GM10248 (cell line): ENCODE measurements at regions of chr4 and their contacts with region 1.

Region 1: GRCh38 chr4:8403173-8403753 is 37.3 kb downstream of the ACOX3 start:
- DNase-seq: peak; percentile 78
- CTCF ChIP-seq: peak; percentile 80

Region 2: GRCh38 chr4:8236106-8236919 is 166.9 kb before region 1 on chr4:
- CTCF ChIA-PET with region 1: interaction called, 36 read pairs
- POLR2A ChIA-PET with region 1: no interaction called
- DNase-seq: no peak
- CTCF ChIP-seq: no peak

Region 3: GRCh38 chr4:8267077-8267476 is 136.2 kb before region 1 on chr4:
- CTCF ChIA-PET with region 1: interaction called, 85 read pairs
- POLR2A ChIA-PET with region 1: no interaction called
- DNase-seq: peak; percentile 82
- CTCF ChIP-seq: peak; percentile 73

Region 4: DNA sequence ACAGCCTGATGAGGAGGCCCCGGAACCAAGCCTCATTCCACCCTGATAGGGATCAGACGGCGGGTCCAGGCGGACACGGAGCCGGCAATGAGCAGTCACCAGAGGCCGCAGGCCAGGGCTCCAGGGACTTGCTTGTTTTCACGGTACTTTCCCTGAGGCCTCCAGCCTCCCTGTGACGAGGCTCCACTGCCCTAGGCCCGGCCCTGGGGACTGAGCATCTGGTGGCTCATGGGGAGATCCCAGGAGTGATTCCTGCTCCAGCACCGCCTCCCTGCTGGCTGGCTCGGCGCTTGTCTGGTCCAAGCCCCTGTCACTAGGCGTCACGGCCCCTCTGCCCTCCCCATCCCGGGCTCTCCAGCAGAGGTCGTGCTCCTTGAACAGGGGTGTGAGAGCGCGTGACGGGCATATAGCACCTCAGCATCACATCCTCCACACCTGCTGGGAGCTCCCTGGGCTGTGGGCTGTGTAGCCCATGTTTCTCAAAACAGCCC is 119.6 kb before region 1 on chr4:
- CTCF ChIA-PET with region 1: no interaction called
- POLR2A ChIA-PET with region 1: no interaction called
- DNase-seq: no peak
- CTCF ChIP-seq: no peak

Region 5: GRCh38 chr4:8376361-8376760 is 26.9 kb before region 1 on chr4:
- CTCF ChIA-PET with region 1: interaction called, 13 read pairs
- POLR2A ChIA-PET with region 1: no interaction called
- DNase-seq: no peak
- CTCF ChIP-seq: no peak

Region 6: DNA sequence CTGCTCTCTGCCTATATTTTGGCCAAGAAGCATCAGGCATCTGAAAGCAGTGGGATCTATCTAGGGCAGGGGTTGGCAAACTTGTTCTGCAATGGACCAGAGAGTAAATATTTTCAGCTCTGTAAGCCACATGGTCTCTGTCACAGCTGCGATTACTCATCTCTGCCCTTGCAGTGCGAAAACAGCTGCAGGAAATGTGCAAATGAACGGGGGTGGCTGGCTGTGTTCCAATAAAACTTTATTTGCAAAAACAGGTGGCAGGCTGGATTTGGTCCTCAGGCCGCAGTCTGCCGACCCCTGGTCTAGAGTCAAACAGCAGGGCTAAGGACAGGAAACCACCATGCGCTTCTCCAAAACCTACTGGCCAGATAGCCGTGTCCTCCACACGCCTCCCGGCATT is 11.3 kb before region 1 on chr4:
- CTCF ChIA-PET with region 1: interaction called, 27 read pairs
- POLR2A ChIA-PET with region 1: no interaction called
- DNase-seq: peak; percentile 57
- CTCF ChIP-seq: no peak

Region 7: DNA sequence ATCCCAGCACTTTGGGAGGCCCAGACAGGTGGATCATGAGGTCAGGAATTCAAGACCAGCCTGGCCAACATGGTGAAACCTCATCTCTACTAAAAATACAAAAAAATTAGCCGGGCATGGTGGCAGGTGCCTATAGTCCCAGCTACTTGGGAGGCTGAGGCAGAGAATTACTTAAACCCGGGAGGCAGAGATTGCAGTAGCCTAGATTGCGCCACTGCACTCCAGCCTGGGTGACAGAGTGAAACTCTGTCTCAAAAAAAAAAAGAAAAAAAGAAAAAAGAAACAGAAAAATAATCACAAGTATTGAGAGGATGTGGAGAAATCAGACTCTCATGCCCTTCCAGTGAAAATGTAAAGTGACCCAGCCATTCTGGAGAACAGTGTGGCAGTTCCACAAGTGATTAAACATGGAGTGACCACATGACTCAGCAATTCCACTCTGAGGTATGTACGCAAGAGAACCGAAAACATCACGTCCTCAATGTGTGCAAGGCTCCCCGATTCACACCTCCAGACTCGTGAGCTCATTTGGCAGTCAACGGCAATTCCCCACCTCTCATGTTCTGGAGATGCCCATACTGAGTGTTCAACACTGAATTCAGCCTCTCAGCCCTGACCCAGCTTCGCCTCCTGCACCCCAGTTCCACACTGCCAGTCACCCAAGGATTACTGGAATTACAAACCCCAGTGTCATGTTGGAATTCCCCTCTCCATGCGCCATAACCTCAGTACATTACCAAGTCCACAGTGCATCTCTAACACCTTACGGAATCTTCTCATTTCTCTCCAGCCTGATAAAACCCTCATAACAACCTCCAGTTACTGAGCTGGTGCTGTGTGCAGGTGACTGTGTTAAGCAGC is 16.1 kb after region 1 on chr4:
- CTCF ChIA-PET with region 1: interaction called, 48 read pairs
- POLR2A ChIA-PET with region 1: no interaction called
- DNase-seq: peak; percentile 73
- CTCF ChIP-seq: no peak

Region 8: DNA sequence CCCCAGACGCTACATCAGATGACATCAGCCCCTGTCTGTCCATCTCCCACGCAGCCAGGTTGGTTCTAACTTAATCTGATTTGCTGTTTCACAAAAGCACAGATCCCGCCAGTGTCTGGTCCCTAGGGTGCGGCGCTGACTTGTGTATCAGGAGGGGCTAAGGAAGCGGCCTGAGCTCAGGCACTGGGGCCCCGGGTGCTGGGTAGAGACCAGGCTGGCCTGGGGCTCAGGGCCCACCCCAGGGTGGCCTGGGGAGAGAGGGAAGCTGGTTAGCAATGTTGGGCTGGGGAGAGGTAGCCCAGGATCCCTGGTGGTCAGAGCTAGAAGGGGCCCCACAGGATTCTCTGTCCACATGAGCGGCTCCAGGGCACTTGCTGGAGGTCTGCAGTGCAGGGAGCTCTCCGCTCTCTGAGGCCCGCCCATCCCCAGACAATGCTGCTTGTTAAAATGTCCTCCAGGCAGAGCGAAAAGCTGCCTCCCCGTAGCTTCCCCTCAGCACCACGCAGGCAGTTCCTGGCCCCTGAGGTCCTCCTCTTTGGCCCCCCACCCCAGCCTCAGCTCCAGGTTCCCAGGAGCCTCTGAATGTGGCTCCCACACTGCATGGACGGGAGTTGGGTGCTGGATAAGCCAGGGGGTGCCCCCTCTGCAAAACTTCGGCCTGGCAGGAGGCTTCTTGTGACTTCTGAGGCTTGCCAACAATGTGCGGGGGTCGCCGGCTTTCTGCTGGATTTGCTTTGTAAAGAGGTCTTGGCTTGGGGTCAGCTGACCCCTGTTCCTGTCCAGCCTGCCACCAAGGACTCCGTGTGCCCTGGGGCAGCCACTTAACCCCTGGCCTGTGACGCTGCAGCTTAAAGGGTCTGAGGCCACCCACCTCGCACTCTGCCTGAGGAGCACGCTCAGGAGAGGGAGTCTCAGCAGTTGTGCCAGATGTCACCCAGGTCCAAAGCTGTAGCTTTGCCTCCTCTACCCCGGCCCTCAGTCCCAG is 302.2 kb after region 1 on chr4:
- CTCF ChIA-PET with region 1: no interaction called
- POLR2A ChIA-PET with region 1: no interaction called
- DNase-seq: no peak
- CTCF ChIP-seq: no peak